Astrocyte of the cerebellum (primary cell): ENCODE measurements at regions of chr4 and their contacts with region 1.

Region 1: GRCh38 chr4:169485791-169486742 is 126.3 kb downstream of the NEK1 start:
- DNase-seq: peak; percentile 63
- H3K4me3 ChIP-seq: no peak overlapping the region
- CTCF ChIP-seq: peak; percentile 50

Region 2: DNA sequence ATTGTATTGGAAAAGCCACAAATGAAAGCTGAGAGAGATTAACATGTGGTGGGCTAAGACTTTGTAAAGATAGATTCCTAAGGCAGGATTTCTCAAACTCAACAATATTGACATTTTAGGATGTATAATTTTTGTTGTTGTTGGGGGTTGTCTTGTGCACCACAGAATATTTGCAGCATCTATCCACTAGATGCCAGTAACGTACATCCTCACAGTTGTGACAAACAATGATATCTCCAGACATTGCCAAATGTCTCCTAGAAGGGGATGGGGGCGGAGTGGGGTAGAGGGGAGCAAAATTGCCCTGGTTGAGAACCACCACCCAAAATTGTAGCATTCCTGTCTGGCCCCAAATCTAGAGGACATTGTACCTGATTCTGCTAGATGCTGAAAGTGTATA is 461.3 kb before region 1 on chr4:
- in situ Hi-C with region 1: loop called (anchors 5 kb)
- DNase-seq: no peak
- H3K4me3 ChIP-seq: no peak overlapping the region
- CTCF ChIP-seq: peak; percentile 62